GM10248 (cell line): ENCODE measurements at regions of chr12 and their contacts with region 1.

Region 1: DNA sequence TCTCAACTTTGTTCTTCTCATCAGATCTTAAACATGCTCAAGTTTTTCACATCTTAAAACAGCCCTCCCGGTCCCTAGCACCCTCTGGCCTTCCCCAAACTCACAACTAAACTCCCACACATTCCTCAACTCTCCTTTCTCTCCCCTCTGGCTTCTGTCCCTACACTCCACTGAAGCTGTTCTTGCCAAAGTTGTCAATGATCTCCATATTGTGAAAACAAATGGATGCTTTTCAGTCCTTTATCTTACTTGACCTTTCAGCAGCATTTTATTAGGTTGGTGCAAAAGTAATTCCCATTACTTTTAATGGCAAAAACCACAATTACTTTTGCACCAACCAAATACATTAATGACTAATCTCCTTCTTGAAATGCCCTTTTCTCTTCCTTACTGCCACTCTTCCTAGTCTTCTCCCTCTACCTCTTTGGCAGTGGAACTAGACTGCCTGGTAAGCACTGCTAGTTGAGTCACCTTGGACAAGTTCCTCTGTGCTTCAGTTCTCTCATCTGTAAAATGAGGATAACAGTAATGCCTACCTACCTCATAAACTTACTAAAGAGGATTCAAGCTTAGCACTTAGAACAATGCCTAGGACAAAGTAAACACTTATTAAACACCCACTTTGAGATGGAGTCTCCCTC is 16.0 kb downstream of the CERS5 start:
- DNase-seq: no peak
- CTCF ChIP-seq: no peak

Region 2: GRCh38 chr12:48671231-48671856 is 1479.8 kb before region 1 on chr12:
- CTCF ChIA-PET with region 1: no interaction called
- POLR2A ChIA-PET with region 1: no interaction called
- DNase-seq: no peak
- CTCF ChIP-seq: no peak

Region 3: DNA sequence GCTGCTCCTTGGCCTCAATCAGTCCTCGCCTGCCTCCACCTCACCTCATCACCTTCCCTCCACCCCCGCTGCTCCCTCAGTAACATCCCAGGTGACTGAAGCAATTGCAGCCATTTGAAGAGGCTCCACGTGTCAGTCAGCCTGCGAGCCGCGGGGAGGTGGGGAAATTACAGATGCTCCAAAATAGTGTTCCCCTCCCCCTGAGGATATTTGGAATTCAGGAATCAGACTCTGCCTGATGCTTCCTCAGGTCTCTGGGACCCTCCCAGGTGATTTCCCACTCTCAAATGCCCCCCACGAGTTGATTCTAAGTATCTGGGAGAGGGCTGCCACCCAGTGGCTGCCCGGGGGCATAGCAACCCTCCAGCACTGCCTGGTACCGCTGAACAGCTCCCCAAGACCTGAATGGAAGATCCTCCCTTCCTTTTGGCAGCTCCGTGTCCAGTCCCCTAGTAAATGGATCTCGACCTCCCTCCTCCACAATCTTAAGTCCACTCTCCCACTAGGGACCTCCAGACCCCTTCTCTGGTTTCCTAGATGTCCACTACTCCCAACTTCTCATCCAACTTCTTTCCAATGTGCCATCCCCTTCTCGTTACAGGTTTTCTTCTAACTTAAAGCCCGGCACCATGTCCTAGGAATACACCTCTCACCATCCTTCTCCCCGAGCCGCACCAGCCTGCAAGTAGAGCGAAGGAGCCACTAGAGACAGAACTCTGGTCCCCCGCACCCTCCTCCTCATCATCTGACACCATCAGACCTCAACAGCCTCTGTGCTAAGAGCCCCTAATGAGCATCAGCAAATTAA is 95.1 kb before region 1 on chr12:
- CTCF ChIA-PET with region 1: no interaction called
- POLR2A ChIA-PET with region 1: no interaction called
- DNase-seq: peak; percentile 83
- CTCF ChIP-seq: peak; percentile 95

Region 4: GRCh38 chr12:50090391-50090790 is 60.8 kb before region 1 on chr12:
- CTCF ChIA-PET with region 1: no interaction called
- POLR2A ChIA-PET with region 1: no interaction called
- DNase-seq: no peak
- CTCF ChIP-seq: no peak

Region 5: DNA sequence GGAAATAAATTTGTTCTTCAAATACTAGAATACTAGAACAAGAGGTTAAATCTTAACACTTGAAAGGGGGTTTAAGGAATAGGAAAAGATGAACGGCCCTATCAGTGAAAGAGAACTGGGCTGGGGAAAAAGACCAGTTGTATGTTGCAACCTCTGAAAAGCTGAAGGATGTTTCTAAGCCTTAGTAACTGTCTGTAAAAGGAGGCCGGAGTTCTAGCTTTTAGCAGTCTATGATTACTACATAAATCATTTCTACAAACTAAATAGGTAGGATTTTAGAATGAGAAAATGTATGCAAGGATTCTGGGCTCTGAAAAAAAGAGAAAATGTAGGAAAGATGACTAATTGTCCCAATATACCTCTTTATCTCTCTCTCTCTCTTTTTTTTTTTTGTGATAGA is 11.1 kb after region 1 on chr12:
- CTCF ChIA-PET with region 1: interaction called, 10 read pairs
- POLR2A ChIA-PET with region 1: no interaction called
- DNase-seq: no peak
- CTCF ChIP-seq: no peak